ENCODE measurements at regions of chr19 and their contacts with region 1.

Region 1: GRCh38 chr19:50724522-50725217 is 1.5 kb downstream of the CLEC11A start:
- DNase-seq: peak; percentile 75
- ATAC-seq: peak; percentile 91
- H3K4me3 Mint-ChIP-seq: peak overlapping the region; percentile 78
- H3K27ac Mint-ChIP-seq: no peak overlapping the region
- H3K4me1 Mint-ChIP-seq: peaks cover 37% of the 10 kb centered on the region
- H3K27me3 Mint-ChIP-seq: peaks cover 66% of the 10 kb centered on the region
- CTCF ChIP-seq: no peak

Region 2: DNA sequence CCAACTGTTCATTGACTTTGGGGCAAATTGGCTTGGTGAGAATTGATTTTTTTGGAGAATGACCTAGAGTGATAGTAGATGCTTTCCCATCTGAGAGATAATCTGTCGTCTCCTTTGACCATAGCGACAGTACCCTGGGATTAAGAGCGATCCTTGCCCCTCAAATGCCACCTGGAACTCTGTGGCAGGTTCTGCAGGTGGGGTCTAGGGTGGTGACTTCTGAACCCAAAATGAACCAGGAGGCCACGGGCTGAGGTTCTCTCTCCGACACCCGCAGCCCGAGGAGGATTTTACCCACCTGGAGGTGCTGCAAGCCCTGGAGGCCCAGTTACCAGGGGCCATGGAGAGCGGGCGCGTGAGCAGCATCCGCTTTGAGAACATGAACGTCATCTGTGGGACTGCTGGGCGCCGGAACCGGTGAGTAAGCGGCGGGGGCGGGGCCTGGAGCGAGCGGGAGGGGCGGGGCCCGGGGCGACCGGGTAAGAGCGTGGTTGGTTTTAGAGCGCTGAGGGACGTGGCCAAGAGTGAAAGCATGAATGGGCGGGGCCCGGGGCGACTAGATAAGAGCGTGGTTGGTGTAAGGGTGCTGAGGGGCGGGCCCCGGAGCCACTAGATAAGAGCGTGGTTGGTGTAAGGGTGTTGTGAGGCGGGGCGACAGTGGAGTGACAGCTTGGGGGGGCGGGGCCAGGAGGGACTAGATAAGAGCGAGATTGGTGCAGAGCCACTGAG is 66.8 kb before region 1 on chr19:
- CTCF ChIA-PET with region 1: no interaction called
- POLR2A ChIA-PET with region 1: no interaction called
- intact Hi-C with region 1: loop called (anchors 2 kb)
- DNase-seq: peak; percentile 61
- ATAC-seq: peak; percentile 87
- H3K4me3 Mint-ChIP-seq: peak overlapping the region; percentile 76
- H3K27ac Mint-ChIP-seq: peak overlapping the region; percentile 80
- H3K4me1 Mint-ChIP-seq: peaks cover 23% of the 10 kb centered on the region
- H3K27me3 Mint-ChIP-seq: peaks cover 52% of the 10 kb centered on the region
- CTCF ChIP-seq: no peak